Activated CD4-positive, alpha-beta memory T cell treated with anti-CD3 and anti-CD28 coated beads, Interleukin-2, amount 10 ng/mL, durations not matched to agents 7 days and 5 days (primary cell): ENCODE measurements at regions of chr6 and their contacts with region 1.

Region 1: GRCh38 chr6:159968440-159969203 is at the start of gene IGF2R:
- DNase-seq: peak; percentile 95
- H3K4me3 Mint-ChIP-seq: peak within 1 kb of the TSS; percentile 90
- H3K27ac Mint-ChIP-seq: peak within 1 kb of the TSS; percentile 83
- H3K4me1 Mint-ChIP-seq: peaks cover 44% of the 10 kb centered on the region
- H3K27me3 Mint-ChIP-seq: peaks cover 3% of the 10 kb centered on the region
- total RNA-seq, gene IGF2R: 66.9 to 70.9 TPM

Region 2: GRCh38 chr6:159979136-159979874 is 10.7 kb after region 1 on chr6:
- CTCF ChIA-PET with region 1: interaction called, 8 read pairs
- POLR2A ChIA-PET with region 1: interaction called, 89 read pairs
- DNase-seq: peak; percentile 74
- H3K4me3 Mint-ChIP-seq: peak overlapping the region; percentile 69
- H3K27ac Mint-ChIP-seq: peak overlapping the region; percentile 95
- H3K4me1 Mint-ChIP-seq: peaks cover 95% of the 10 kb centered on the region
- H3K27me3 Mint-ChIP-seq: no peaks in the 10 kb centered on the region

Region 3: DNA sequence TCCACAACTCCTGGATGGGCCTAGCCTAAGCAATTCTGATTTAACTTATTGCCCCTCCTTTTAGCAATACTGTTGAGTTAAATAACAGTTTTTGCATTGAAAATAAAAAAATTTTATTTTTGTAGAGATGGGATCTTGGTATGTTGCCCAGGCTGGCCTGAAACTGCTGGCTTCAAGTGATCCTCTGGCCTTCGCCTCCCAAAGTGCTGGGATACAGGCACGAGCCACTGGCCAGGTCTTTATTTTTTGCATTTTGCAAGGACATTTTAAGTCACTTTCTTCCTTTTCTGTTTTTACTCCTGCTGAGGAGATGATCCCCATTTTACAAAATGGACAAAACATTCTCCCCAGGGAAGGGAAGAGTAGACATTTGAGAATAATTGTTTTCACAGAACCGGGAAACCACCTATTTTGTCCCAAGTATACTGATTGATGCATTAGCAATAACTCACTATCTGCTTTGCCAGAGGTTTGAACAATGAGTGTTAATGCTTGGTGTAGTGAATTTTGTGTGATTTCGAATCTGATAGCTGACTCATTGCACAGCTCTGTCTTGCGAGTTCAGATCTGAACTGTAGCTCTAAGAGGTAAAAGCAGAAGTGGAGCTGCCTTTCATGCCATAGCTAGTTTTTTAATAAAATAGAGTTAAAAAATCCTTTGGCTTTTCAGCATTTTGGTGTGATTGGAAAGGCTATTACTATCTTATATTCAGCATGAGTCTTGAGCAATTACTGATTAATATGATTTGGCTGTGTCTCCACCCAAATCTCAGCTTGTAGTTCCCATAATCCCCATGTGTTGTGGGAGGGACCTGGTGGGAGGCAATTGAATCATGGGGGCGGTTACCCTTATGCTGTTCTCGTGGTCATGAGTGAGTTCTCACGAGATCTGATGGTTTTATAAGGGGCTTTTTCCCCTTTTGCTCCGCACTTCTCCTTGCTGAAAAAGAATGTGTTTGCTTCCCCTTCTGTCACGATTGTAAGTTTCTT is 21.2 kb after region 1 on chr6:
- CTCF ChIA-PET with region 1: interaction called, 4 read pairs
- POLR2A ChIA-PET with region 1: interaction called, 12 read pairs
- DNase-seq: no peak
- H3K4me3 Mint-ChIP-seq: no peak overlapping the region
- H3K27ac Mint-ChIP-seq: no peak overlapping the region
- H3K4me1 Mint-ChIP-seq: peaks cover 39% of the 10 kb centered on the region
- H3K27me3 Mint-ChIP-seq: no peaks in the 10 kb centered on the region

Region 4: DNA sequence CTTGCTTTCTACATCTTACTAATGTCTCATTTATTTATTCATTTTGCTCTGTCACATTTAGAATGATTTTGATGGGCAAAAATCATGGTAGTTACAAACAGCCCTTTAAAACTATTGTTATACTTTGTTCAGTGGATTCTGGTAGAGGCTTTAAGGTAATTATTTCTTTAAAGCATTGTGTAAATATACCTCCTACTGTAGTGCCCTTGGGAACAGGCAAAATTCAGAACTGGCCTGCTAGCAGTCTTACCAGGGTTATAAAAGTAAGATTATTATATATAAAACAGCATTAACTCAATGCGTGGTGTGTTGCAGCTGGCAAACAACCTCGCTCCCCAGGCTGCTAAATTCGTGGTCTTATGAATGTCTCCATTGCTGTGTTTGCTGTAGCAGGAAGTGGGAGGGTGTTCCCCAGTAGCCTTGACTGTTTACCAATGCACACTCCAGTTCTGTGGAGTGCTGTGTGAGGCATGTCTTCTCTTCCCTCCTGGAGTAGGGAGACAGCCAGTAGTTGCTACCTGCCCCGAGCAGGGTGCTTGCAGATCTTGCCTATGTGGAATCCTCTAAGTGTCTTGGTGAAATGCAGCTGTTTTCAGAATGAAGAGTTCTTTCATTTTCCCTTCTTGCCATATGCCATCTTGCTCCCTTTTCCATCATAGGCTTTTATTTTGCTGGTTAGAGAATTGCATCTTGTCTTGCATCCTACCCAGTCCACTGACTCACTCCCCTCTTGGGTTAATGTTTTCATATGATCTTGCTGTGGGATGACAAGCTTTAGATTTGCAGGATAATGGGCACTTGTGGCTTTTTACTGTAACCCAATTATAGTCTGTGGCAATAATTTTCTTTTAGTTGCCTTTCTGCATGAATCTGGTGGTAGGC is 45.6 kb after region 1 on chr6:
- CTCF ChIA-PET with region 1: interaction called, 3 read pairs
- POLR2A ChIA-PET with region 1: interaction called, 46 read pairs
- DNase-seq: peak; percentile 39
- H3K4me3 Mint-ChIP-seq: peak overlapping the region; percentile 3
- H3K27ac Mint-ChIP-seq: peak overlapping the region; percentile 91
- H3K4me1 Mint-ChIP-seq: peaks cover 57% of the 10 kb centered on the region
- H3K27me3 Mint-ChIP-seq: no peaks in the 10 kb centered on the region

Region 5: DNA sequence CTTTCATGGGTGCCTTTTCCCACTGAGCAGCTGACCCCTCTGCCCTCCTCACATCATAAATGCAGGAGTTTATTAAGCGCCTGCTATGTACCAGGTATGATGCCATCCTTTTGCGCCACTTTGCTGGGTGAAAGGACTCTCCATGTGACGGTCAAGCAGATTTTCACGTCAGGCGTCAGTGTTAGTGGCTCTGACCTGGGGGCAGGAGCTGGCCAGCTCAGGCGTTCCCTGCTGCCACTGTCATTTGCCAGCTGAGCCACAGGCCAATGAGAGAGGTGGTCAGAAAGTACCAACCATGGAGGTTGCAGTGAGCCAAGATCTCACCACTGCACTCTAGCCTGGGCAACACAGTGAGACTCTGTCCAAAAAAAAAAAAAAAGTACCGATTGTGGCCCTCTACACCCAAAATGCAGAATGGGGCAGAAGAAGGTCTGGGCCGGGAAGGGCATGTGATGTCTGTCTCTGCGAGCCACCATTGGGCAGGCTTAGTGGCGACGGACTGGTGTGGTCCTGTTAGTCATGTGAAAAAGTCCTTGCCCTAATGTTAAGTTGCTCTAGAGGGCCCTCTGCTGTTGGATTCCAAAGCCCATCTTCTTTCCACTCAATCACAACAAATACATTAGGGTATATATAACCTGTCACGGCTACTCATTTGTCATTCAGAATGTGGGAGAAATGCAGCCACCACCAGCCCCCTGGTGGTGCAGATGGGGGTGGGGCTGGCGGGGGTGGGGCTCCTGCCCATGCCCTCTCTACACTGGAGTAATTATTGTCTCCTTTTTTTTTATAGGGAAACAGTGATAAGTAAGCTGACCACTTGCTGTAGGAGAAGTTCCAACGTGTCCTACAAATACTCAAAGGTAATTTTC is 134.6 kb after region 1 on chr6:
- CTCF ChIA-PET with region 1: no interaction called
- POLR2A ChIA-PET with region 1: no interaction called
- DNase-seq: peak; percentile 36
- H3K4me3 Mint-ChIP-seq: no peak overlapping the region
- H3K27ac Mint-ChIP-seq: no peak overlapping the region
- H3K4me1 Mint-ChIP-seq: peaks cover 26% of the 10 kb centered on the region
- H3K27me3 Mint-ChIP-seq: no peaks in the 10 kb centered on the region